A673 (cell line): ENCODE measurements at regions of chr10 and their contacts with region 1.

Region 1: DNA sequence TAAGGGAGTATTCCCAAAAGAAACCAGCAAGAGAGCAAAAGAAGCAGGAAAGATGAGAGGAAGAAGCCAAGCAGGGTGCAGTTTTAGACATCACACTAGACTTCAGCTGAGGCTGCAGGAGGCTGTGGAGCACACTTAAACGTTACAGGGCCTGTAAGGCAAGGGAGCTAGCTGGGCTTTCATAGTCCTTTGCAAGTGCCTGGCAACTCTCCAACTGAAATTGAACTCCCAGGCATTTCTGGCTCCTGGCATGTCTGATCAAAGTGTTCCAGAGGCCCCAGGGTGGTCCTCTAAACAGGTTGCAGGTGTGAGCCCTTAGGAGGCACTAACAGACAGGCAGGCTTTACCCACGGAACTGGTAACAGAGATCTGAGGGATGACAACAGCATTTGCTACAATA is 750.2 kb downstream of the XPNPEP1 start:
- DNase-seq: peak; percentile 45
- H3K4me3 ChIP-seq: no peak overlapping the region
- H3K27ac ChIP-seq: no peak overlapping the region
- H3K4me1 ChIP-seq: peaks cover 9% of the 10 kb centered on the region
- H3K27me3 ChIP-seq: no peaks in the 10 kb centered on the region
- CTCF ChIP-seq: no peak

Region 2: GRCh38 chr10:108783897-108784296 is 389.2 kb before region 1 on chr10:
- CTCF ChIA-PET with region 1: no interaction called
- POLR2A ChIA-PET with region 1: no interaction called
- intact Hi-C with region 1: no loop called
- DNase-seq: peak; percentile 82
- H3K4me3 ChIP-seq: no peak overlapping the region
- H3K27ac ChIP-seq: no peak overlapping the region
- H3K4me1 ChIP-seq: no peaks in the 10 kb centered on the region
- H3K27me3 ChIP-seq: no peaks in the 10 kb centered on the region
- CTCF ChIP-seq: peak; percentile 68

Region 3: GRCh38 chr10:108911814-108912541 is 261.1 kb before region 1 on chr10:
- CTCF ChIA-PET with region 1: no interaction called
- POLR2A ChIA-PET with region 1: no interaction called
- intact Hi-C with region 1: loop called (anchors 10 kb)
- DNase-seq: peak; percentile 85
- H3K4me3 ChIP-seq: peak overlapping the region; percentile 93
- H3K27ac ChIP-seq: peak overlapping the region; percentile 71
- H3K4me1 ChIP-seq: peaks cover 9% of the 10 kb centered on the region
- H3K27me3 ChIP-seq: no peaks in the 10 kb centered on the region
- CTCF ChIP-seq: peak; percentile 86

Region 4: GRCh38 chr10:108982159-108982558 is 191.0 kb before region 1 on chr10:
- CTCF ChIA-PET with region 1: no interaction called
- POLR2A ChIA-PET with region 1: no interaction called
- intact Hi-C with region 1: no loop called
- DNase-seq: no peak
- H3K4me3 ChIP-seq: no peak overlapping the region
- H3K27ac ChIP-seq: no peak overlapping the region
- H3K4me1 ChIP-seq: peaks cover 4% of the 10 kb centered on the region
- H3K27me3 ChIP-seq: no peaks in the 10 kb centered on the region
- CTCF ChIP-seq: no peak

Region 5: GRCh38 chr10:109103278-109103677 is 69.8 kb before region 1 on chr10:
- CTCF ChIA-PET with region 1: no interaction called
- POLR2A ChIA-PET with region 1: no interaction called
- intact Hi-C with region 1: no loop called
- DNase-seq: no peak
- H3K4me3 ChIP-seq: no peak overlapping the region
- H3K27ac ChIP-seq: no peak overlapping the region
- H3K4me1 ChIP-seq: peaks cover 10% of the 10 kb centered on the region
- H3K27me3 ChIP-seq: no peaks in the 10 kb centered on the region
- CTCF ChIP-seq: no peak

Region 6: GRCh38 chr10:109259293-109259692 is 86.2 kb after region 1 on chr10:
- CTCF ChIA-PET with region 1: no interaction called
- POLR2A ChIA-PET with region 1: no interaction called
- intact Hi-C with region 1: no loop called
- DNase-seq: no peak
- H3K4me3 ChIP-seq: no peak overlapping the region
- H3K27ac ChIP-seq: no peak overlapping the region
- H3K4me1 ChIP-seq: no peaks in the 10 kb centered on the region
- H3K27me3 ChIP-seq: no peaks in the 10 kb centered on the region
- CTCF ChIP-seq: no peak